ENCODE measurements at regions of chr12 and their contacts with region 1.

Region 1: GRCh38 chr12:114508529-114509129 is 102.7 kb upstream of the TBX5 start:
- ATAC-seq: peak in 5 of 8 experiments; percentile 23 to 91 (median 82)
- H3K4me3 ChIP-seq: no peak overlapping the region
- H3K27ac ChIP-seq: no peak overlapping the region
- H3K4me1 ChIP-seq: no peaks in the 10 kb centered on the region

Region 2: GRCh38 chr12:113980537-113981337 is 527.9 kb before region 1 on chr12:
- in situ Hi-C with region 1: loop called in 4 of 9 experiments (anchors 10 to 25 kb)
- ATAC-seq: peak; percentile 54 to 85 (median 60)
- H3K4me3 ChIP-seq: no peak overlapping the region
- H3K27ac ChIP-seq: no peak overlapping the region
- H3K4me1 ChIP-seq: no peaks in the 10 kb centered on the region

Region 3: GRCh38 chr12:114166362-114166761 is 342.3 kb before region 1 on chr12:
- in situ Hi-C with region 1: loop called in 1 of 9 experiments (anchors 25 kb)
- ATAC-seq: peak in 3 of 8 experiments; percentile 38 to 74 (median 68)
- H3K4me3 ChIP-seq: no peak overlapping the region
- H3K27ac ChIP-seq: no peak overlapping the region
- H3K4me1 ChIP-seq: no peaks in the 10 kb centered on the region